Breast epithelium (tissue), 4 donors: ENCODE measurements at regions of chr1 and their contacts with region 1.

Region 1: DNA sequence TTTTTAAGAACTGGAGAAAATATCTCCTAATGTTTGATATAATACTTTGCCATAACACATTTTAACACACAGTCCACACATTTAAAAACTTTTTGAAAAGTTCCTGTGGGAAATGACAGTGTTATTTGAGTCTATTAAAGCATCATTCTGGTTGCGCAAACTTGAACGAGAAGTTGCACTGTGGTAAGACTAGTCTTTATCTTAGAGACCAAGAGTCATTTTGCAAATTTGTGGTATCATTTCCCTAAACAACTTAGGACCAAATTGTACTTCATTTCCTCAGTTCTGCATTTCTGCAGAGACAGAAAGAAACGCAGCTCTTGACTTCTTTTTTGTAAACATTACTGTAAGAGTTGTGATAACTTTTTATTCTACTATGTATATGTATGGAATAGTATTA is at the start of gene RGS18:
- DNase-seq: no peak
- H3K4me3 ChIP-seq: no peak within 1 kb of the TSS
- H3K27ac ChIP-seq: no peak within 1 kb of the TSS
- H3K4me1 ChIP-seq: no peaks in the 10 kb centered on the region
- H3K27me3 ChIP-seq: no peaks in the 10 kb centered on the region
- CTCF ChIP-seq: no peak
- POLR2A ChIP-seq: no peak
- total RNA-seq, gene RGS18: 2.0 to 4.4 (median 2.6) TPM

Region 2: GRCh38 chr1:192183788-192184187 is 25.6 kb after region 1 on chr1:
- intact Hi-C with region 1: loop called (anchors 2 kb)
- DNase-seq: no peak
- H3K4me3 ChIP-seq: no peak overlapping the region
- H3K27ac ChIP-seq: no peak overlapping the region
- H3K4me1 ChIP-seq: no peaks in the 10 kb centered on the region
- H3K27me3 ChIP-seq: no peaks in the 10 kb centered on the region
- CTCF ChIP-seq: no peak
- POLR2A ChIP-seq: no peak